ENCODE measurements at regions of chr9 and their contacts with region 1.

Region 1: GRCh38 chr9:18215626-18216025 is 258.3 kb upstream of the ADAMTSL1 start:
- DNase-seq: no peak
- ATAC-seq: no peak
- H3K4me3 ChIP-seq: no peak overlapping the region
- H3K27ac ChIP-seq: no peak overlapping the region
- H3K4me1 ChIP-seq: no peaks in the 10 kb centered on the region
- H3K27me3 ChIP-seq: no peaks in the 10 kb centered on the region
- CTCF ChIP-seq: no peak

Region 2: DNA sequence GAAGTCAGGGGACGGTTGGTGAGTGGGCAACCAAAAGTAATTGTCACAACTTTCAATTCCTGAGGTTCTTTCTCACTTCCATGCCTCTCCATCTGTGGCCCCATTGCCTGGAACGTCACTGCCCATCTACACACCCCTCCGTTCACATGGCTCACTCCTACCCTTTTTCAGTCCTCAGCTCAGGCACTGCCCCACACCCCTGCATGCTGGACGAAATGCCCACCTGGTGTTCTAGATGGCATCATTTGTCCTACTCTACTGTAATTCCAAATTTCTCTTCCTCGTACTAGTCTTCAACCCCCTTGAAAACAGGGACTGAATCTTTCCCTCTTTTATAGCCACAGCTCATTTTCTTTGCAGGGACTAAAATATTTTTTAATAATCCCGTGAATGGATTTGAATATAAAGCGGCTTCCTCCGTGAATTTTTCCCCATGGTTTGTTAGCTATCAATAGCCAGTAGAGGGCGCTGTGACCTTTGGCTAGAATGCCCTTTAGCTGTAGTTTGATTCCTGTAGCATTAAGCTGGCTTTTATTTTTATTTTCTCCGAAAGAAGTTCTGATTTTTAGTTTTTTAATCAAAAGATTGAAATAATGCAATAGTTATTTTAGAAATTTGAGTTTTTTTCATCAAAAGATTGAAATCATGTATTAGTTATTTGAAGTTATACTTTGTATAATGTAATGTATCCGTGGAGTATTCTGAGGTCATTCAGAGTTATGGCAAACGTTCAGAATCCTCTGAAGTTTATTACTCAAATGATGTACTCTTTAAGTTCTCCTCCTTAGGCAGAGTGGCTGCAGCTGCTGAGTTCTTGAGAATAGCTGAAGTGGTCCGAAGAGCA is 404.7 kb before region 1 on chr9:
- intact Hi-C with region 1: loop called (anchors 10 kb)
- DNase-seq: no peak
- ATAC-seq: peak in 1 of 2 donors; percentile 52
- H3K4me3 ChIP-seq: no peak overlapping the region
- H3K27ac ChIP-seq: no peak overlapping the region
- H3K4me1 ChIP-seq: no peaks in the 10 kb centered on the region
- H3K27me3 ChIP-seq: peaks cover 7% of the 10 kb centered on the region
- CTCF ChIP-seq: peak; percentile 82